PC-9 (cell line): ENCODE measurements at regions of chr3 and their contacts with region 1.

Region 1: GRCh38 chr3:197466586-197467399 is 89.0 kb downstream of the BDH1 start:
- DNase-seq: peak; percentile 41 to 58
- H3K4me3 ChIP-seq: peak overlapping the region; percentile 29; the same call in 1 of the 2 replicates
- H3K27ac ChIP-seq: peak overlapping the region; percentile 52
- H3K4me1 ChIP-seq: peaks cover 52% of the 10 kb centered on the region
- H3K27me3 ChIP-seq: no peaks in the 10 kb centered on the region
- CTCF ChIP-seq: no peak

Region 2: GRCh38 chr3:197317250-197317963 is 149.4 kb before region 1 on chr3:
- CTCF ChIA-PET with region 1: no interaction called
- POLR2A ChIA-PET with region 1: interaction called, 11 read pairs
- intact Hi-C with region 1: no loop called
- DNase-seq: peak; percentile 55 to 85
- H3K4me3 ChIP-seq: no peak overlapping the region
- H3K27ac ChIP-seq: no peak overlapping the region
- H3K4me1 ChIP-seq: peaks cover 18% of the 10 kb centered on the region
- H3K27me3 ChIP-seq: no peaks in the 10 kb centered on the region
- CTCF ChIP-seq: no peak

Region 3: GRCh38 chr3:197356275-197356674 is 110.5 kb before region 1 on chr3:
- CTCF ChIA-PET with region 1: no interaction called
- POLR2A ChIA-PET with region 1: no interaction called
- intact Hi-C with region 1: no loop called
- DNase-seq: no peak
- H3K4me3 ChIP-seq: no peak overlapping the region
- H3K27ac ChIP-seq: no peak overlapping the region
- H3K4me1 ChIP-seq: no peaks in the 10 kb centered on the region
- H3K27me3 ChIP-seq: no peaks in the 10 kb centered on the region
- CTCF ChIP-seq: no peak

Region 4: DNA sequence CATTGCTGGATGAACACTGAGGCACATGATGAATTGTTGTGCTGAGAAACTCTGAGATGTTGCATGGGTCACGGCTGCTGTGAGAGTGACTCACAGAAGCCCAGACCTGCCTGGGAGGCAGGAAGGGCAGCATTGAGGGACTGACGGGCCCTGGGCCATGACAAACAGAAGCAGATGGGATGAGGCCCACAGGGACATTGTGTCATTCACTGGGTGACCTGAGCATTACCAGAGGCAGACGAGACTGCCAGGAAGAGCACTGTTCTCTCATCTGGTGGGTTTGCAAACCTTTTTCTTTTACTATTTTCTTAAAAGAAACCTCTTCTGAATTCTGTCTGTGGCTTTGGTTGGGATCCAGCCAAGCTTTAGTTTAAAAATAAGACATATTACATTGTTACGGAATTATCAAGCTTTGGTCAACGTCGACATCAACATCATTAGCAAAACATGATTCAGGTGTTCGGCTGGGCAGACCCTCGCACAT is 21.2 kb after region 1 on chr3:
- CTCF ChIA-PET with region 1: interaction called, 5 read pairs
- POLR2A ChIA-PET with region 1: interaction called, 14 read pairs
- intact Hi-C with region 1: loop called (anchors 1 kb)
- DNase-seq: peak; percentile 94 to 97
- H3K4me3 ChIP-seq: peak overlapping the region; percentile 3; the same call in 1 of the 2 replicates
- H3K27ac ChIP-seq: peak overlapping the region; percentile 71
- H3K4me1 ChIP-seq: peaks cover 67% of the 10 kb centered on the region
- H3K27me3 ChIP-seq: no peaks in the 10 kb centered on the region
- CTCF ChIP-seq: no peak